GM12878 (cell line): ENCODE measurements at regions of chr6 and their contacts with region 1.

Region 1: GRCh38 chr6:328136-328670 is 35.9 kb downstream of the DUSP22 start:
- DNase-seq: peak; percentile 100
- ATAC-seq: peak; percentile 76
- H3K4me3 ChIP-seq: peak overlapping the region; percentile 37
- H3K27ac ChIP-seq: peak overlapping the region; percentile 97
- H3K4me1 ChIP-seq: peaks cover 85% of the 10 kb centered on the region
- H3K27me3 ChIP-seq: no peaks in the 10 kb centered on the region
- CTCF ChIP-seq: no peak
- EP300 ChIP-seq: peak; percentile 87 to 96
- POLR2A ChIP-seq: no peak
- RAD21 ChIP-seq: 0 out of 2 replicates have a peak, but pooled peaks have one; percentile 32

Region 2: DNA sequence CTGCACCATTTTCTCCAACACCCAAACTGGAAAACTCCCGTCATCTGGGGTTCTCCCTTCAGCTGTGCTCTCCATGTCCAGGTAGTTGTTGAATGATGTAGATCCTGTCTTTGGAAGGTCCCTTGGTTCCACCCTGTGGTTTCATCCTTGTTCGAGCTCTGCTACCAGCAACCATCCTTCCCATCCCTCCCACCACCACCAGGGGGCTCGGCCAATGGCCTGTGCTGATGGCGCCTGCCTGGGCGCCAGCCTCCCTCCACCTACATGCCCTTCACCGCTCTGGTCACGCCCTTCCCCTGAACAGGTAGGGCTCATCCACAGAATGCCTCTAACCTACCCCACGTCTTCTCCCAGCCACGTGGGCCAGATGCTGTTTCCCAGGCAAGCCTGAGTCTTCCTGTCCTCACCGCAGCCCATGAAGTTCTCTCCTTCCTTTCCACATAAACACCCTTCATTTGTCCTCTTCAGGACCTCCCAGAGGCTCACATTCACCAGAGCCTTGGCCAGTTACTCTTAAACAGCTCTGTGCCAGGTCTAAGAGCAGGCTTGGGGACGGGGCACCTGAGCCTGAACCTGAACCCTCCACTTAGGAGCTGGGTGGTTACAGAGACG is 111.0 kb before region 1 on chr6:
- CTCF ChIA-PET with region 1: interaction called, 3 read pairs
- POLR2A ChIA-PET with region 1: interaction called, 5 read pairs
- RAD21 ChIA-PET with region 1: interaction called, 131 read pairs
- SMC1A ChIA-PET with region 1: interaction called, 11 read pairs
- in situ Hi-C with region 1: no loop called
- intact Hi-C with region 1: no loop called
- DNase-seq: peak; percentile 55
- ATAC-seq: 0 out of 3 replicates have a peak, but pooled peaks have one; percentile 1
- H3K4me3 ChIP-seq: peak overlapping the region; percentile 13; the same call in 1 of the 2 replicates
- H3K27ac ChIP-seq: peak overlapping the region; percentile 94
- H3K4me1 ChIP-seq: peaks cover 86% of the 10 kb centered on the region
- H3K27me3 ChIP-seq: no peaks in the 10 kb centered on the region
- CTCF ChIP-seq: peak; percentile 57 to 73 (median 73)
- EP300 ChIP-seq: no peak
- POLR2A ChIP-seq: no peak
- RAD21 ChIP-seq: peak; percentile 54

Region 3: DNA sequence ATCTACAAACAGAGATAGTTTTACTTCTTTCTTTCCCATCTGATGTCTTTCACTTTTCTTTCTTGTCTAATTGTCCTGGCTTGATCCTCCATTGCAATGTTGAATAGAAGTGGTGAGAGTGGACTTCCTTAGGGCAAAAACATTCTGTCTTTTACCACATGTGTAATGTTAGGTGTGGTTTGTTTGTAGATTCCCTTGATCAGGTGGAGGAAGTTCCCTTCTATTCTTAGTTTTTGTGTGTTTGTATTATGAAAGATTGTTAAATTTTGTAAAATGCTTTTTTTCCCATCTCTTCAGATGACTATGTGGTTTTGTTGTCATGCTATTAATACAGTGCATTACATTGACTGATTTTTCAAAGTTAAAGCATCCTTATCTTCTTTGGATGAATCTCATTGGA is 77.5 kb before region 1 on chr6:
- CTCF ChIA-PET with region 1: no interaction called
- POLR2A ChIA-PET with region 1: no interaction called
- RAD21 ChIA-PET with region 1: no interaction called
- SMC1A ChIA-PET with region 1: no interaction called
- in situ Hi-C with region 1: no loop called
- intact Hi-C with region 1: no loop called
- DNase-seq: no peak
- ATAC-seq: peak; percentile 35
- H3K4me3 ChIP-seq: no peak overlapping the region
- H3K27ac ChIP-seq: peak overlapping the region; percentile 20; the same call in 1 of the 2 replicates
- H3K4me1 ChIP-seq: peaks cover 37% of the 10 kb centered on the region
- H3K27me3 ChIP-seq: no peaks in the 10 kb centered on the region
- CTCF ChIP-seq: no peak
- EP300 ChIP-seq: 0 out of 4 replicates have a peak, but pooled peaks of 1 of the 2 experiments have one; percentile 23
- POLR2A ChIP-seq: no peak
- RAD21 ChIP-seq: no peak

Region 4: DNA sequence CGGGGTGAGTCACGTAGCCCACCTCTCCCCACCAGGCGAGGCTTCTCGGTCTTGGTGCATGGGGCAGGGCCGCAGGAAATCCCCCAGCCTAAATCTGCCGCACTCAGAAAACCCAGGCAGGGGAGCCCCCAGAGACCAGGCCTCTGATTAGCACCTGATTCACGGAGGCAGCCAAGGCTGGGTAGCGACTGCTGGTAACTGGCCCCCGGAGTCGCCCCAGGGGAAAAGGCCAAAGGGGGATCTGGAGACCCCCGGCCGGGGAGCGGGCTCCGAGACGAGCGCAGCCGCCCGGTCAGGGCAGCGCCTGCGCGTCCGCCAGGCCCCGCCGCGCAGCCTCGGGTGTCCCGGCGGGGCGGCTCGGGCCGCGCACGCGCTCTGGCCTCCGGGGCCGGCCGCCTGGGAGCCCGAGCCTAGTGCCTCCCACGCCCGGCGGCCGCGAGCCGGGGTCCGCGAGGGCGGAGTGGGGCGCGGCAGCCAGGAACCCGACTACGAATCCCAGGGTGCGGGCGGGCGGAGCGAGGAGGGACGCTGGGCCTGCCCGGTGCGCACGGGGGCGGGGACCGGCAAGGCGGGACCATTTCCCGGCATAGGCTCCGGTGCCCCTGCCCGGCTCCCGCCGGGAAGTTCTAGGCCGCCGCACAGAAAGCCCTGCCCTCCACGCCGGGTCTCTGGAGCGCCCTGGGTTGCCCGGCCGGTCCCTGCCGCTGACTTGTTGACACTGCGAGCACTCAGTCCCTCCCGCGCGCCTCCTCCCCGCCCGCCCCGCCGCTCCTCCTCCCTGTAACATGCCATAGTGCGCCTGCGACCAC is 36.3 kb before region 1 on chr6 and contains the start of gene DUSP22:
- CTCF ChIA-PET with region 1: interaction called, 46 read pairs
- POLR2A ChIA-PET with region 1: interaction called, 67 read pairs
- RAD21 ChIA-PET with region 1: interaction called, 29 read pairs
- SMC1A ChIA-PET with region 1: interaction called, 56 read pairs
- in situ Hi-C with region 1: no loop called
- intact Hi-C with region 1: loop called (anchors 1 kb)
- DNase-seq: peak; percentile 81
- ATAC-seq: peak; percentile 45
- H3K4me3 ChIP-seq: peak within 1 kb of the TSS; percentile 78
- H3K27ac ChIP-seq: peak within 1 kb of the TSS; percentile 100
- H3K4me1 ChIP-seq: peaks cover 64% of the 10 kb centered on the region
- H3K27me3 ChIP-seq: no peaks in the 10 kb centered on the region
- CTCF ChIP-seq: no peak
- EP300 ChIP-seq: peak; percentile 53 to 76; a peak in 2 of 4 replicates
- POLR2A ChIP-seq: no peak
- RAD21 ChIP-seq: peak; percentile 42
- polyA plus RNA-seq, gene DUSP22: 93.4 to 99.7 TPM

Region 5: GRCh38 chr6:313087-313486 is 15.1 kb before region 1 on chr6:
- CTCF ChIA-PET with region 1: interaction called, 83 read pairs
- POLR2A ChIA-PET with region 1: interaction called, 227 read pairs
- RAD21 ChIA-PET with region 1: interaction called, 170 read pairs
- SMC1A ChIA-PET with region 1: interaction called, 707 read pairs
- in situ Hi-C with region 1: no loop called
- intact Hi-C with region 1: loop called (anchors 1 kb)
- DNase-seq: no peak
- ATAC-seq: peak; percentile 1; the same call in 1 of the 3 replicates
- H3K4me3 ChIP-seq: no peak overlapping the region
- H3K27ac ChIP-seq: peak overlapping the region; percentile 65
- H3K4me1 ChIP-seq: peaks cover 93% of the 10 kb centered on the region
- H3K27me3 ChIP-seq: no peaks in the 10 kb centered on the region
- CTCF ChIP-seq: no peak
- EP300 ChIP-seq: no peak
- POLR2A ChIP-seq: no peak
- RAD21 ChIP-seq: no peak

Region 6: DNA sequence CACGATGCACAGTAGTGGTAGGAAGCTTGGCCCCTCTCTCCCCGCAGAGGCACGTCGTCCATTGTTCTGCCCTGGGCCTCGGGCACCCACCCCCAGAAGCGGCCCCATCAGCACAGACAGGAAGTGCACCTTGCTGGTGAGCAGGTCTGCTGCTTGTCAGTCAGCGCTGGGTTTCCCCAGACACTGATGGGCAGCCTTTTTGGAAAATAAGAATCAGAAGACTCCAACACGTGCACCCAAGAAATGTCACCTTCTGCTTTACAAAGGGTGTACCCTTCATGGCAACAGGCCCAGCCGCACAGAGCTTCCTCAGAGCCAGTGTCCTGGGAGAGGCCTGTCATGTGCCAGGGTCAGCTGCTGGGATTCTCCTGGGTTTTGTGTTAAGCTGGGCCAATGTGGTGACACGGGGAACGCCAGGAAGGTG is 28.6 kb after region 1 on chr6:
- CTCF ChIA-PET with region 1: interaction called, 32 read pairs
- POLR2A ChIA-PET with region 1: interaction called, 10 read pairs
- RAD21 ChIA-PET with region 1: interaction called, 26 read pairs
- SMC1A ChIA-PET with region 1: interaction called, 230 read pairs
- in situ Hi-C with region 1: no loop called
- intact Hi-C with region 1: no loop called
- DNase-seq: no peak
- ATAC-seq: peak; percentile 80
- H3K4me3 ChIP-seq: no peak overlapping the region
- H3K27ac ChIP-seq: peak overlapping the region; percentile 56
- H3K4me1 ChIP-seq: peaks cover 45% of the 10 kb centered on the region
- H3K27me3 ChIP-seq: no peaks in the 10 kb centered on the region
- CTCF ChIP-seq: no peak
- EP300 ChIP-seq: no peak
- POLR2A ChIP-seq: no peak
- RAD21 ChIP-seq: no peak

Region 7: DNA sequence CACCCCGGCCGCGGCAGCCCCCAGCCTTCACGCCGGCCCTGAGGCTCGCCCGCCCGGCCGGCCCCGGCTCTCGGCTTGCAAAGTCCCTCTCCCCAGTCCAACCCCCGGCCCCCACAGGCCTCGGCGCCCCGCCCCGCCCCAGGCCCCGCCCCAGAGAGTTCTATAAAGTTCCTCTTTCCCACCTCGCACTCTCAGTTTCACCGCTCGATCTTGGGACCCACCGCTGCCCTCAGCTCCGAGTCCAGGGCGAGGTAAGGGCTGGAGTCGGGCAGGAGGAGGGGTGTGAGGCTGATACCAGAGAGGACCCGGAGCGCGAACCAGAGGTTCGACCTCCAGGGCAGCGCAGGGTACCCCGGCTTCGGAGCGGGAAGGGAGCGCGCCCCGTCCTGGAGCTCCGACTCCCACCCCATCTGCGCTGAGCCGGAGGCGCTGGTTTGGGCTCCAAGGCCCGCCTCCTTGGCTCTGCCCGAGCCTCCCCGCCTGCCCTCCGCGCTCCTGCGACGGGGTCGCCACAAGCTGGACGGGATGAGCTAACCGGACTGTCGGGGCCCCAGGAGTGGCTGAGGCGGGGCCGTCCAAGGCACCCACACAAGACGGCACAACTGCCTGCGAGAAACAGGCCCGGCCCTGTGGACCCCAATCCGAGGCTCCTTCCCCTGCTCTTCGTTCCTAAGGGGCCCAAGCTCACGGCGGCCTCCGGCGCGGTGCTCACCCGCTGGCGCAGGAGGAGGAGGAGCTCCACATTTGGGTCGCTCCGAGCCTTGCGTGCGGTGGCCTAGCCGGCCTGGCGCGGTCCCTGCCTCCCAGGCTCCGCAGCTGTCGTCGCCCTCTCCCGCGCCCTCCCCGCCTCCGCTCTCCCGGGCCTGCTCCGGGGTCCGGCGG is 63.6 kb after region 1 on chr6 and contains the start of gene IRF4:
- CTCF ChIA-PET with region 1: interaction called, 13 read pairs
- POLR2A ChIA-PET with region 1: interaction called, 11 read pairs
- RAD21 ChIA-PET with region 1: interaction called, 95 read pairs
- SMC1A ChIA-PET with region 1: interaction called, 116 read pairs
- in situ Hi-C with region 1: no loop called
- intact Hi-C with region 1: loop called (anchors 1 kb)
- DNase-seq: no peak
- ATAC-seq: peak; percentile 63
- H3K4me3 ChIP-seq: peak within 1 kb of the TSS; percentile 95
- H3K27ac ChIP-seq: peak within 1 kb of the TSS; percentile 97
- H3K4me1 ChIP-seq: peaks cover 33% of the 10 kb centered on the region
- H3K27me3 ChIP-seq: no peaks in the 10 kb centered on the region
- CTCF ChIP-seq: no peak
- EP300 ChIP-seq: no peak
- POLR2A ChIP-seq: peak; percentile 77
- RAD21 ChIP-seq: peak; percentile 25; the same call in 1 of the 2 replicates
- polyA plus RNA-seq, gene IRF4: 50.0 to 98.9 TPM